B cell (primary cell): ENCODE measurements at regions of chr1 and their contacts with region 1.

Region 1: DNA sequence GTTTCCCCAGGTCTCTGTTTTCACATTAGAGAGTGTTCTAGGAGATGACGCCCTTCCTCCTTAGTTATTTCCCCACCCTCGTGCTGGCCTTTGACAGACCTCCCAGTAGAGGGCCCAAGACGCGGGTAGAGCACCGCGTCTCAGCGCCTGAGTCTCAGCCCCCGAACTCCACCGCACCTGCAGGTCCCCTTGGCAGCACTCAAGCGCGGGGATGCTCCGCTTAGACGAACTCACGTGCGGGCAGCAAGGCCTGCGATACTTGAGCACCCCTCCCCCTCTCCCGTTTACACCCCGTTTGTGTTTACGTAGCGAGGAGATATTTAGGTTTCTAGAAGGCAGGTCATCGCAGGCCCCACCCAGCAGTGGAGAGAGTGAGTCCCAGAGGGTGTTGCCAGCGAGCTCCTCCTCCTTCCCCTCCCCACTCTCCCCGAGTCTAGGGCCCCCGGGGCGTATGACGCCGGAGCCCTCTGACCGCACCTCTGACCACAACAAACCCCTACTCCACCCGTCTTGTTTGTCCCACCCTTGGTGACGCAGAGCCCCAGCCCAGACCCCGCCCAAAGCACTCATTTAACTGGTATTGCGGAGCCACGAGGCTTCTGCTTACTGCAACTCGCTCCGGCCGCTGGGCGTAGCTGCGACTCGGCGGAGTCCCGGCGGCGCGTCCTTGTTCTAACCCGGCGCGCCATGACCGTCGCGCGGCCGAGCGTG is at the start of gene CD55:
- DNase-seq: peak; percentile 100
- ATAC-seq: peak; percentile 86
- H3K4me3 ChIP-seq: peak within 1 kb of the TSS; percentile 83 to 100 (median 91)
- H3K4me3 Mint-ChIP-seq: peak within 1 kb of the TSS; percentile 98
- H3K27ac ChIP-seq: peak within 1 kb of the TSS; percentile 98
- H3K27ac Mint-ChIP-seq: peak within 1 kb of the TSS; percentile 100
- H3K4me1 ChIP-seq: peaks cover 38 to 43% of the 10 kb centered on the region in 2 donors
- H3K4me1 Mint-ChIP-seq: peaks cover 56% of the 10 kb centered on the region
- H3K27me3 ChIP-seq: no peaks in the 10 kb centered on the region
- H3K27me3 Mint-ChIP-seq: no peaks in the 10 kb centered on the region
- CTCF ChIP-seq: peak; percentile 43
- total RNA-seq, gene CD55: 239 and 252 TPM in 2 replicates

Region 2: DNA sequence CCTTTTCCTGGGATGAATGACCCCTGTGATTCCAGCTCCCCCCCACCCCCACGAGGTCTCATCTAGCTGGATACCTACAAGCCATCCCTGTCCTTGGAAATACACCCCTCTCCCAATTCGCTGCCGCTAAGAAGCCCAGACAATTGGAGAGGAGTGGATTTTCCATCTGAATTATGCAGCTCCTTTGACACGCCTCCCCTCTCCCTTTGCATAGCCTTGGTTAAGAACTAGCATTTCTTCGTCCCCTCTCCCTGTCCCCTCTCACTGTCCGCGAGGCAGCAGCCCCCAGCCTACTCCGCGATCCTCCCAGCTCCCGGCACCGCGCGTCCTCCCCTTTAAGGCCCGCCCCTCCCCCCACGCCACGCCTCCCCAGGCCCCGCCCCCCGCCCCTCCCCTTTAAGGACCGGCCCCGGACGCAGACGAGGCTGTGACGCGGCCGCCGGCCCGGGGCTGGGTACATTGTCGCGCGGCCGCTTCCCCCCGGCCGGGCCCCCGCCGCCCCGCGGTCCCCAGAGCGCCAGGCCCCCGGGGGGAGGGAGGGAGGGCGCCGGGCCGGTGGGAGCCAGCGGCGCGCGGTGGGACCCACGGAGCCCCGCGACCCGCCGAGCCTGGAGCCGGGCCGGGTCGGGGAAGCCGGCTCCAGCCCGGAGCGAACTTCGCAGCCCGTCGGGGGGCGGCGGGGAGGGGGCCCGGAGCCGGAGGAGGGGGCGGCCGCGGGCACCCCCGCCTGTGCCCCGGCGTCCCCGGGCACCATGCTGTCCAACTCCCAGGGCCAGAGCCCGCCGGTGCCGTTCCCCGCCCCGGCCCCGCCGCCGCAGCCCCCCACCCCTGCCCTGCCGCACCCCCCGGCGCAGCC is 636.5 kb before region 1 on chr1 and contains the start of gene MAPKAPK2:
- CTCF ChIA-PET with region 1: no interaction called
- POLR2A ChIA-PET with region 1: no interaction called
- intact Hi-C with region 1: loop called (anchors 5 kb)
- DNase-seq: peak; percentile 83
- ATAC-seq: peak; percentile 70
- H3K4me3 ChIP-seq: peak within 1 kb of the TSS; percentile 69 to 91 (median 87)
- H3K4me3 Mint-ChIP-seq: peak within 1 kb of the TSS; percentile 100
- H3K27ac ChIP-seq: peak within 1 kb of the TSS; percentile 76 to 86
- H3K27ac Mint-ChIP-seq: peak within 1 kb of the TSS; percentile 96
- H3K4me1 ChIP-seq: peaks cover 54 to 72% of the 10 kb centered on the region in 2 donors
- H3K4me1 Mint-ChIP-seq: peaks cover 82% of the 10 kb centered on the region
- H3K27me3 ChIP-seq: no peaks in the 10 kb centered on the region
- H3K27me3 Mint-ChIP-seq: no peaks in the 10 kb centered on the region
- CTCF ChIP-seq: no peak
- total RNA-seq, gene MAPKAPK2: 85.8 and 91.1 TPM in 2 replicates

Region 3: DNA sequence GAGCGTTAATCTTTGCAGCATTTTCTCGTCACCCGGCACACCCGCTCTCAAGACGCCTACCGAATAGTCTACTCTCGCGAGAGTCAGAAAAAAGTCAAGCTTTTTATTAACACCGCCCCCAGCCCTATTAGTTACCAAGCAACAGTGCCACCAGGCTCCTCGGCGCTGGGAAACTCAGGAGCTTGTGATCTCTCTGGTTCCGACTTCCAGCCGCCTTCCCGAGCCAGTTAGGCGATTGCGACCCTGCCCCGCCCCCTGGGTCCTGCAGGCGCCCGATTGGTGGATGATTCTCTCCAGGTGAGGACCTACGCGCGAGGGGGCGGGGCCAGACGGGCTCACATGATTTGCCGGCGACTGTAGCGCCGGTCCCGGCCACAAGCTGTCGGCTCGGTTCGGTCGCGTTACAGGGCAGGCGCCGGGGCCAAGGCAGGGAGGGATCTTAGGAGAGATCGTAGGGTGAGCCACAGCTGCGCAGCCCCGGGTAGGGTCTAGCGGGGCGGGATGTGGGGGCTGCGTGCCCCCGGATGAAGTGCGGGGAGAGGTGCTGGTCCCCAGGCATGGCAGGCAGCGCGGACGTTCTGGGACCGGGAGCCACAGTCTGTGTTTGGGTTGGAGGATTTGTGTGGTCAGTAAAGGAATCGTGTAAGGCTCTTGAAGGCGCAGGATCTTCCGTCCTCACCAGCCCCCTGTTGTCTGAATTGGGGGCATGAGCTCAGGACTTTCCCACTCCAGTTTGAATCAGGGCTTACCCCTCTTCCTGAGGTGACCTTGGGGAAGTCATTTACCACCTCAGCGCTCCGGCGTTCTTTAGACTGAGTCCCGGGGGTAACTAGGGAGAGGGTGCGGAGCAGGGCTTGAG is 268.1 kb before region 1 on chr1 and contains the start of gene PFKFB2:
- CTCF ChIA-PET with region 1: no interaction called
- POLR2A ChIA-PET with region 1: interaction called, 7 read pairs
- intact Hi-C with region 1: loop called (anchors 1 kb)
- DNase-seq: peak; percentile 98
- ATAC-seq: peak; percentile 87
- H3K4me3 ChIP-seq: peak within 1 kb of the TSS; percentile 53 to 92 (median 73)
- H3K4me3 Mint-ChIP-seq: peak within 1 kb of the TSS; percentile 99
- H3K27ac ChIP-seq: peak within 1 kb of the TSS; percentile 87 to 96
- H3K27ac Mint-ChIP-seq: peak within 1 kb of the TSS; percentile 99
- H3K4me1 ChIP-seq: peaks cover 39 to 42% of the 10 kb centered on the region in 2 donors
- H3K4me1 Mint-ChIP-seq: peaks cover 53% of the 10 kb centered on the region
- H3K27me3 ChIP-seq: no peaks in the 10 kb centered on the region
- H3K27me3 Mint-ChIP-seq: no peaks in the 10 kb centered on the region
- CTCF ChIP-seq: peak; percentile 10
- total RNA-seq, gene PFKFB2: 15.6 and 18.2 TPM in 2 replicates

Region 4: DNA sequence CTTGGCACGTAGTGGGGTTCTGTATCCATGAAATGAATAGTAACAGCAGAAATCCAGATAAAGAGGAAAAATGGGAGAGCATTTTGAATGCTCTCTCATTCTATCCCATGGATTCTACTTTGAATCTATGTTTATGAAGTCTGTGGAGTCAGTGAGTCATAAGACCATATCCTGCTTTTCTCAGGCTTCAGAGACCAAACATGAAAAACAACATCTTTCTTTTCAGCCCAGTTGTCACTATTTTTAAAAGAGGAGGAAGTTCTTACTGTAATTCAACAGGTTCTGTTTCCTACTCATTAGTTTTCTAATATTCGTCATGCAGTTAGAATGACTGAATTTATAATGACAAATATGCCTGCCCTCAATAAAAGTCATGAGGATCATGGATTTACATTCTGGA is 39.2 kb before region 1 on chr1:
- CTCF ChIA-PET with region 1: no interaction called
- POLR2A ChIA-PET with region 1: no interaction called
- intact Hi-C with region 1: loop called (anchors 2 kb)
- DNase-seq: no peak
- ATAC-seq: peak; percentile 28
- H3K4me3 ChIP-seq: peak overlapping the region in 1 of 5 experiments; percentile 28
- H3K4me3 Mint-ChIP-seq: peak overlapping the region; percentile 66
- H3K27ac ChIP-seq: peak overlapping the region; percentile 28 to 50
- H3K27ac Mint-ChIP-seq: peak overlapping the region; percentile 48
- H3K4me1 ChIP-seq: peaks cover 38 to 40% of the 10 kb centered on the region in 2 donors
- H3K4me1 Mint-ChIP-seq: peaks cover 47% of the 10 kb centered on the region
- H3K27me3 ChIP-seq: no peaks in the 10 kb centered on the region
- H3K27me3 Mint-ChIP-seq: peaks cover under 1% of the 10 kb centered on the region
- CTCF ChIP-seq: no peak

Region 5: GRCh38 chr1:207309775-207310273 is 11.4 kb before region 1 on chr1:
- CTCF ChIA-PET with region 1: interaction called, 7 read pairs
- POLR2A ChIA-PET with region 1: interaction called, 13 read pairs
- intact Hi-C with region 1: loop called (anchors 1 kb)
- DNase-seq: peak; percentile 55
- ATAC-seq: peak; percentile 58
- H3K4me3 ChIP-seq: peak overlapping the region in 3 of 5 experiments; percentile 15 to 33 (median 25)
- H3K4me3 Mint-ChIP-seq: peak overlapping the region; percentile 74
- H3K27ac ChIP-seq: peak overlapping the region; percentile 67 to 88
- H3K27ac Mint-ChIP-seq: peak overlapping the region; percentile 83
- H3K4me1 ChIP-seq: peaks cover 18 to 23% of the 10 kb centered on the region in 2 donors
- H3K4me1 Mint-ChIP-seq: peaks cover 29% of the 10 kb centered on the region
- H3K27me3 ChIP-seq: no peaks in the 10 kb centered on the region
- H3K27me3 Mint-ChIP-seq: no peaks in the 10 kb centered on the region
- CTCF ChIP-seq: no peak

Region 6: GRCh38 chr1:207404849-207405525 is 83.8 kb after region 1 on chr1:
- CTCF ChIA-PET with region 1: interaction called, 23 read pairs
- POLR2A ChIA-PET with region 1: interaction called, 4 read pairs
- intact Hi-C with region 1: loop called (anchors 2 kb)
- DNase-seq: peak; percentile 77
- ATAC-seq: peak; percentile 71
- H3K4me3 ChIP-seq: no peak overlapping the region
- H3K4me3 Mint-ChIP-seq: no peak overlapping the region
- H3K27ac ChIP-seq: no peak overlapping the region
- H3K27ac Mint-ChIP-seq: peak overlapping the region; percentile 74
- H3K4me1 ChIP-seq: peaks cover 18 to 27% of the 10 kb centered on the region in 2 donors
- H3K4me1 Mint-ChIP-seq: peaks cover 30% of the 10 kb centered on the region
- H3K27me3 ChIP-seq: no peaks in the 10 kb centered on the region
- H3K27me3 Mint-ChIP-seq: no peaks in the 10 kb centered on the region
- CTCF ChIP-seq: peak; percentile 92

Region 7: DNA sequence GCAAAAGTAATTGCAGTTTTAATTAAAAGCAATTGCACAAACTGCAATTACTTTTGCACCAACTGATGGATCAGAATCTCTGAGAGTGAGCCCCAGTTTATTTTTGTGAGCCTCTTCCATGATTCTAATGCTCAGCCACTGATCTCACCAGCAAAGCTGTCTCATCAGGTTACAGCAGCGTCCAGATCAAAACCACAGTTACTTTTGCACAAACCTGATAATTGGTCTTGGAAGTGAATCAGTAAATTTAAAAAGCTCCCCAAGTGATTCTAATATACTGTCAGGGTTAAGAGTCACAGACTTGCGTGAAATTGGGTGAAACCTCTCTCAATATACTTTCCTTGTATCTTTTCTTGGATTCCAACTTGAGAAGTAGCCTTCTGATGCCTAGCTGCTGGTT is 119.4 kb after region 1 on chr1:
- CTCF ChIA-PET with region 1: no interaction called
- POLR2A ChIA-PET with region 1: no interaction called
- intact Hi-C with region 1: no loop called
- DNase-seq: no peak
- ATAC-seq: no peak
- H3K4me3 ChIP-seq: no peak overlapping the region
- H3K4me3 Mint-ChIP-seq: no peak overlapping the region
- H3K27ac ChIP-seq: no peak overlapping the region
- H3K27ac Mint-ChIP-seq: no peak overlapping the region
- H3K4me1 ChIP-seq: peaks cover 3 to 8% of the 10 kb centered on the region in 2 donors
- H3K4me1 Mint-ChIP-seq: peaks cover 29% of the 10 kb centered on the region
- H3K27me3 ChIP-seq: no peaks in the 10 kb centered on the region
- H3K27me3 Mint-ChIP-seq: no peaks in the 10 kb centered on the region
- CTCF ChIP-seq: no peak

Region 8: DNA sequence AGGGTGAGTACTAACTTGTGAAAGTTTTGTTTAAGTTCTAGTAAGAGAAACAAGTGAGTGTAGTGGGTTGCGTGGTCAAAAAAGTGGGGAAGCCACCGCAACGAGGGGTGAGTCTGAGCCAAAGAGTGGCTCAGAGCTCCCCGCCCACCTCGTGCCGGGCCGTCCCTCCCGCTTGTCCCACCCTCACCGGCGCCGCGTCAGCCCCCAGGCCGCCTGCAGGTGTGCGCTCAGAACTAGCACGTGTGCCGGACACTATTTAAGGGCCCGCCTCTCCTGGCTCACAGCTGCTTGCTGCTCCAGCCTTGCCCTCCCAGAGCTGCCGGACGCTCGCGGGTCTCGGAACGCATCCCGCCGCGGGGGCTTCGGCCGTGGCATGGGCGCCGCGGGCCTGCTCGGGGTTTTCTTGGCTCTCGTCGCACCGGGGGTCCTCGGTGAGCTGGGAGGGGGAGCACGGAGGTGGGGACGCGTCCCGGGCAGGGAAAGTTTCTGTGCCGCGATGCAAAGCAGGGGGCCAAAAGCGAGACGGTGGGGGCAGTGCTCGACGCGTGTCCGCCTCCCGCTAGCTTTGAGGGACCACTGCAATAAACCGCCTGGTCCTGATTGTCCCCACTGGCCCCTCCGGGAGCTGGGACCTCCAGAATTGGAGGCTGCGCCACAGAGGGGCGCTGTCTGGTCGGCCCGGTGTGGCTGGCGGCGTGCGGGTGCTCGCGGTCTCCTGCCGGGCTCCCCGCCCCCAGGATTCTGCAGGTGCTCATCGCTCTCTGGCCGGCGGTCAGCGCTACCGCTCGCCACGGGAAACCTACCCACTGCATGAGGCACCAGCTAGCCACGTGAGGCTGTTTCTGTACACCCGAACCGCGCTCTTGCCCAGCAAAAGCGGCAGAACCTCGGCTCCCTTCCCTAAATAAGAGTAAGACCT is 133.1 kb after region 1 on chr1 and contains the start of gene CR2:
- CTCF ChIA-PET with region 1: interaction called, 4 read pairs
- POLR2A ChIA-PET with region 1: interaction called, 10 read pairs
- intact Hi-C with region 1: loop called (anchors 1 kb)
- DNase-seq: peak; percentile 89
- ATAC-seq: peak; percentile 92
- H3K4me3 ChIP-seq: peak within 1 kb of the TSS; percentile 75 to 90 (median 84)
- H3K4me3 Mint-ChIP-seq: peak within 1 kb of the TSS; percentile 86
- H3K27ac ChIP-seq: peak within 1 kb of the TSS; percentile 69 to 82
- H3K27ac Mint-ChIP-seq: peak within 1 kb of the TSS; percentile 79
- H3K4me1 ChIP-seq: peaks cover 44 to 46% of the 10 kb centered on the region in 2 donors
- H3K4me1 Mint-ChIP-seq: peaks cover 15% of the 10 kb centered on the region
- H3K27me3 ChIP-seq: no peaks in the 10 kb centered on the region
- H3K27me3 Mint-ChIP-seq: no peaks in the 10 kb centered on the region
- CTCF ChIP-seq: peak; percentile 75
- total RNA-seq, gene CR2: 28.1 and 30.5 TPM in 2 replicates